Posterior vena cava (tissue), 2 donors: ENCODE measurements at regions of chr4 and their contacts with region 1.

Region 1: GRCh38 chr4:33270403-33270802 is 2550.2 kb downstream of the PCDH7 start:
- DNase-seq: no peak

Region 2: GRCh38 chr4:31872910-31873309 is 1397.5 kb before region 1 on chr4:
- intact Hi-C with region 1: no loop called
- DNase-seq: no peak

Region 3: DNA sequence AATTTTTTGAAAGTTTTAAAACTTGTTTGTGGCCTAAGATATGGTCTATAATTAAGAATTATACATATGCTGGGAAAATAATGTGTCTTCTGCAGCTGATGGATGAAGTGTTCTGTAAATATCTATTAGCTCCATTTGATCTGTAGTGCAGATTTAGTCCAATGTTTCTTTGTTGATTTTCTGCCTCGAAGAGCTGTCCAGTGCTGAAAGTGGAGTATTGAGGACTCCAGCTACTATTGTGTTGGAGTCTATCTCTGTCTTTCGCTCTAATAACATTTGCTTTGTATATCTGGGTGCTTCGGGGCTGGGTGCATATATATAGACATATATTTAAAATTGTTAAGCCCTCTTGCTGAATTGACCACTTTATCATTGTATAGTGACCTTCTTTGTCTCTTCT is 422.9 kb before region 1 on chr4:
- intact Hi-C with region 1: no loop called
- DNase-seq: no peak

Region 4: GRCh38 chr4:35087218-35087617 is 1816.8 kb after region 1 on chr4:
- intact Hi-C with region 1: loop called in 1 of 2 experiments (anchors 10 kb)
- DNase-seq: no peak